Mammary epithelial cell (primary cell): ENCODE measurements at regions of chr6 and their contacts with region 1.

Region 1: DNA sequence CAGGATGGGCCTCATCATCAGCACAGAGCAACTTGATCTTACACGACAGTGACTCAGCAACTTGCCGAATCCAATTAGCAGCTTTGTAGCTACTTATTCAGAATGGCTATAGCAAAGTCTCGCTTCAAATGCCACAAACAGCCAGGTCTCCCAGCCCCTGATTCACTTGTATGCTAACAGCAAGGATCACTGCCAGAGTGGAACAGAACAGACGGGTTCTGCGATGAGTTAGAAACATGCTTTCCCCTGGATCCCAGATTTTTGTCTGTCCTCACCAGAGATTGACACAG is 254.4 kb downstream of the NRN1 start:
- DNase-seq: no peak
- H3K4me3 ChIP-seq: no peak overlapping the region
- H3K27ac ChIP-seq: no peak overlapping the region
- H3K4me1 ChIP-seq: no peaks in the 10 kb centered on the region
- H3K27me3 ChIP-seq: no peaks in the 10 kb centered on the region
- CTCF ChIP-seq: no peak

Region 2: GRCh38 chr6:5511954-5512353 is 240.4 kb before region 1 on chr6:
- CTCF ChIA-PET with region 1: no interaction called
- dilution Hi-C with region 1: no loop called
- in situ Hi-C with region 1: no loop called
- intact Hi-C with region 1: no loop called
- DNase-seq: no peak
- H3K4me3 ChIP-seq: no peak overlapping the region
- H3K27ac ChIP-seq: no peak overlapping the region
- H3K4me1 ChIP-seq: no peaks in the 10 kb centered on the region
- H3K27me3 ChIP-seq: no peaks in the 10 kb centered on the region
- CTCF ChIP-seq: no peak

Region 3: DNA sequence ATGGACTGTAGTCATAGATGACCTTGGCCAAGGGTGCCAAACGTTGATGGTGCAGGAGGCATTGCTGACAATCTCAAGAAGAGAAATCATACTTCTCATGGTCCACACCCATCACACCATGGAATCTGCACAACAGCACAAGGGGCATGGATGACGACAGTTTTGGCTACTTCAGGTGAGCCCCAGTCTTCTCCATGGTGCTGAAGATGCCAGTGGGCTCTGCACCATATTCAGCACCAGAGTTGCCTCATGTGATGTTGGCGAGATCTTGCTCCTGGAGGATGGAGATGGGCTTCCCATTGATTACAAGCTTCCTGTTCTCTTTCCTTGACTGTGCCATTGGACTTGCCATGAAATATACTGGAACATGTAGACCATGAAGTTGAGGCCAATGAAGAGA is 65.5 kb after region 1 on chr6:
- CTCF ChIA-PET with region 1: no interaction called
- dilution Hi-C with region 1: loop called (anchors 5 kb)
- in situ Hi-C with region 1: no loop called
- intact Hi-C with region 1: no loop called
- DNase-seq: no peak
- H3K4me3 ChIP-seq: no peak overlapping the region
- H3K27ac ChIP-seq: no peak overlapping the region
- H3K4me1 ChIP-seq: no peaks in the 10 kb centered on the region
- H3K27me3 ChIP-seq: peaks cover 2% of the 10 kb centered on the region
- CTCF ChIP-seq: no peak

Region 4: GRCh38 chr6:6046716-6047115 is 294.4 kb after region 1 on chr6:
- CTCF ChIA-PET with region 1: no interaction called
- dilution Hi-C with region 1: no loop called
- in situ Hi-C with region 1: no loop called
- intact Hi-C with region 1: no loop called
- DNase-seq: no peak
- H3K4me3 ChIP-seq: no peak overlapping the region
- H3K27ac ChIP-seq: no peak overlapping the region
- H3K4me1 ChIP-seq: no peaks in the 10 kb centered on the region
- H3K27me3 ChIP-seq: no peaks in the 10 kb centered on the region
- CTCF ChIP-seq: no peak

Region 5: DNA sequence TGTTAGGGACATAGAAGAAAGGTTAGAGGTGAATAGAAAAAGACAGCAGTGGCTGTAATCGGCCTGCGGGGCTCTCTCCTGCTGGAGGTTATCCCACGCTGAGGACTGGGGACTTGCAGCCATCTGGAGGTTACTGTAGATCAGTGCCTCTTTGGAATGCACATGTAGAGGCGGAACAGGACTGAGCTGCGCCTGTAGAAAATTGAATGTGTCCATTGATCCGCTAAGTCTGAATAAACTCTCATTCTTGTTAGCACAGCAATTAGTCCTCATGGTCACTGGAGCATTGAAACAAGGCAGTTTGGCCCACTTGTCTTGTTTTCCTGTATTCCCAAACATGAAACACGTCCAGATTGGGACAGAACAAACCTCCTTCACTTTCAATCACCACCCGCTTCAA is 614.5 kb after region 1 on chr6:
- CTCF ChIA-PET with region 1: no interaction called
- dilution Hi-C with region 1: no loop called
- in situ Hi-C with region 1: no loop called
- intact Hi-C with region 1: no loop called
- DNase-seq: no peak
- H3K4me3 ChIP-seq: no peak overlapping the region
- H3K27ac ChIP-seq: no peak overlapping the region
- H3K4me1 ChIP-seq: no peaks in the 10 kb centered on the region
- H3K27me3 ChIP-seq: peaks cover 4% of the 10 kb centered on the region
- CTCF ChIP-seq: no peak